Right ventricle myocardium inferior (tissue), 1 donor: ENCODE measurements at regions of chr3 and their contacts with region 1.

Region 1: GRCh38 chr3:140723576-140723975 is 45.7 kb downstream of the TRIM42 start:
- DNase-seq: no peak
- ATAC-seq: no peak

Region 2: DNA sequence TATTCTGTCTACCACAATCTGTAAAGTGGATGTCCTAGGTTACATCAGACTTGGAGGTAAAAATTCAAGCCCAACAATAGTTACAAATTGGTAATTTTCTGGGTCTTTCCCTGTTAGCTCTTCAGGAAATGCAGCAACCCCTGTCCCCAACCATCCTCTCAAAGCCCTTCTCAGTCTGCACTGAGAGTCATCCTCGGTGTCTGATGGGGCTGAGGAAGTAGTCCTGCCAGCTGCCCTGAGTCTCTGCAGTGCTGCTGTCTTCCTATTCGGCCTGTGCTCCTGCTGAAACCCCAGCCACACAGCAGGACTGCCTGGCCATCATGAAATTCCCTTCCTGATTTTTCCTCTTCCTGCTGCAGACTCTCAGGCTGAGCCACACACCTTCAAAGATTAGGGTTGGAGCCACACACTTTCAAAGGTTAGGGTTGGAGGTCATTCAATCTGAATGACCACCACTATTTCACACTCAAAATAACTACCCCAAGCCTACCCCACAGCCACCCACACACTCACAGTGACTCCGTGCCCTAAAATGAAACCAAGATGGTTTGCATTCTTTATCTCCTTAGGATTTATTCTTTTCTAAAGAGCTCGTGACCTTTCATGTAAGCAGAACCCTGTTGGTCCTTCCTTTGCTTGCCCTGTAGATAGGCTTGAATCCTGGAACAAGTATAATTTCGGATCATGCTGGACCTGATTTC is 28.1 kb before region 1 on chr3:
- intact Hi-C with region 1: loop called (anchors 1 kb)
- DNase-seq: no peak
- ATAC-seq: no peak